A549 (cell line): ENCODE measurements at regions of chr17 and their contacts with region 1.

Region 1: DNA sequence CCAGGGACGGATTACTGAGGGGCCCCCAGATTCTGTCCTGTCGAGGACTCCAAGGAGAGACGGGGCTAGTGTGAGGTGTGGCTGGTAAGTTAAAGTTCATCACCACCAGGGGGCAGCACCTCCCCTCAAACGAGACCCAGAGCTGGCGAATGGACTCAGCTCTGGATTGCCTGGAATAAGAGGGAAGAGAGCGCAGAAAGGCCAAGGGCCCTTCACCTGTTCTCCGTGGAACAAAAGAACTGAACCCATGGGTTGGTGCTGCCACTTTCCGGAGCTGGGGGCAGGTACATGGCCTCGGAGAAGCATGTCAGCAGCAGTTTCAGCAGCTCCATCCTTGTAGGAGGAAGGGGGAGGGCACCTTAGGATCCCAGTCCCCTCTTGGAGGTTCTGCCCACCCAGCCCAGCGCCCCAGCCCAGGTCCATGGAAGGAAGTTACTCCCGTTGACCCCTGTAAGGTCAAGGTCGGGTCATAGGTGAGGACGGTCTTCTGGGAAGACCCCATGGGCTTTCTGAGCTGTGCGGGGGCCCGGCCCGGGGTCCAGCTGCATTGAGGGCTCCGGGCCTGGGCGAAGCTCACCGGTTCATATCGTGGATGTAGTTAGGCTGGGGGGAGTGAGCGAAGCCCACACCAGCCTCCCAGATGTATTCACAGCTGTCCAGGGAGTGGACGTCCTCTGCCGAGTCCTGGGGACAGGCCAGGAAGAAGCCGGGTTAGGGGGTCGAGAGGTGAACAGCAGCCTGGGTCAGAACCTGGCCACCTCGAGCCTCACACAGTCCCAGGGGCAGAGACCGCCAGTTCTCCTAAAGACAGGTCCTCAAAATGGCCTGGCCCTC is 10.7 kb downstream of the HID1 start:
- DNase-seq: peak; percentile 91 to 96
- ATAC-seq: peak; percentile 58 to 80
- H3K4me3 ChIP-seq: no peak overlapping the region
- H3K27ac ChIP-seq: 0 out of 6 replicates have a peak overlapping the region, but pooled peaks of 1 of the 2 experiments have one; percentile 9
- H3K4me1 ChIP-seq: peaks cover 12% of the 10 kb centered on the region
- CTCF ChIP-seq: peak; percentile 95
- EP300 ChIP-seq: no peak
- POLR2A ChIP-seq: no peak
- RAD21 ChIP-seq: peak; percentile 97 to 98

Region 2: DNA sequence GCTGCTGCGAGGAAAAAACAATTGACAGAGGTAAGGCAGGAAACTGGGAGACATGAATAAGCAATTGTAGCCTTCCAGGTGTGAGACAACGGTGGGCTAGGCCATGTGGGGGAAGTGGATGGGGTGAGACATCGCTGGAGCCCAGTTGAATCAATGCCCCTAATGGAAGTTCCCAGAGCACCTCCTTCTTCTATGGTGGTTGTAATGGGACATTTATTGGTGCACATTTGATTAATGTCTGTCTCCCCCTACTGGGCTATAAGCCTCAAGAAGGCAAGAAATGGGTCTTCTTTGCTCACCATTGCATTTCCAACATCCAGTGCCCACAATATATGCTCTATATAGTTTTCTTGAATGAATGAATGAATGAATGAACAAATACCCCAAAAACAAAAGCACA is 315.6 kb before region 1 on chr17:
- CTCF ChIA-PET with region 1: no interaction called
- POLR2A ChIA-PET with region 1: no interaction called
- DNase-seq: peak; percentile 62 to 74
- ATAC-seq: peak in 1 of 2 experiments; percentile 81; a peak in 3 of 6 replicates
- H3K4me3 ChIP-seq: no peak overlapping the region
- H3K27ac ChIP-seq: no peak overlapping the region
- H3K4me1 ChIP-seq: no peaks in the 10 kb centered on the region
- CTCF ChIP-seq: peak; percentile 51
- EP300 ChIP-seq: no peak
- POLR2A ChIP-seq: no peak
- RAD21 ChIP-seq: peak; percentile 38 to 62; a peak in 4 of 5 replicates

Region 3: GRCh38 chr17:74807925-74808324 is 153.9 kb before region 1 on chr17:
- CTCF ChIA-PET with region 1: no interaction called
- POLR2A ChIA-PET with region 1: no interaction called
- DNase-seq: no peak
- ATAC-seq: no peak
- H3K4me3 ChIP-seq: no peak overlapping the region
- H3K27ac ChIP-seq: no peak overlapping the region
- H3K4me1 ChIP-seq: no peaks in the 10 kb centered on the region
- CTCF ChIP-seq: no peak
- EP300 ChIP-seq: no peak
- POLR2A ChIP-seq: no peak
- RAD21 ChIP-seq: no peak

Region 4: DNA sequence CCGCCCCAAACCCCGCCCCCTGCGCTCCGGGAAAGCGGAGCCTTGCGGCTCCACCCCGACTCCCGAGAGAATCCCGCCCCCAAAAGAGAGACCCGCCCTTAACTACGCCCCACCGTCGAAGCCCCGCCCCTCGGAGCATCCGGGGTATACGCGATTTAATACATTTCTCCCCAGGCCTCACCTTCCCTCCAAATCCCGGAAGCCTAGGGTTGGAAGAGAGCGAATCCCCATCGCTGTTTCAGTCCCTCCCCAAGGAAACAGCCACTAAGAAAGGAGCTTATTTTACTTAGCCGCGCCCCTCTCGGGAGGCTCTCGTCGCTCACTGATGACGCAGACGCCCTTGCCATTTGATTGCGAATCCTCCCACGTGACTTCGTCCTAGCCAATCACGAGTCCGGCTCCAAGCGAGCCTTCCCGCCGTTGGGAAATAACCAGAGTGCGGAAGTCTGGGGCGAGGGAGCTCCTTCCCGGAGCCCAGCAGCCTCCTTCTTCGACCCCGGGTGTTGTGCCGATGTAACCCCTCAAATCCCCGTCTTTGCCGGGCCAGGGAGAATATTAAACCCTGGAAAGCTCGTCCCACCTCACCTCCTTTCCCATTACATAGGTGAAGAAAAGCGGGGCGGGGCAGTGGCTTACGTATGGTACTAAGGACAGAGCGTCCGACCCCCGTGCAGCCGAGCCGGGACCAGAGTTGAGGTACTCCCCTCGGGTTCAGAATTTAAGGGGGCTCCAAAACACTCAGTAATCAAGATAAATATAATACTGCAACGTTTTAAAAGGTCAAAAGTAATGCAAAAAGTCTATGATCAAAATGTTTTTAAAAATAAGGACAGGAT is 88.6 kb before region 1 on chr17:
- CTCF ChIA-PET with region 1: interaction called, 9 read pairs
- POLR2A ChIA-PET with region 1: interaction called, 12 read pairs
- DNase-seq: peak; percentile 100
- ATAC-seq: peak; percentile 92 to 96
- H3K4me3 ChIP-seq: peak overlapping the region; percentile 69
- H3K27ac ChIP-seq: peak overlapping the region; percentile 91 to 94
- H3K4me1 ChIP-seq: peaks cover 22% of the 10 kb centered on the region
- CTCF ChIP-seq: no peak
- EP300 ChIP-seq: no peak
- POLR2A ChIP-seq: peak; percentile 96
- RAD21 ChIP-seq: no peak

Region 5: DNA sequence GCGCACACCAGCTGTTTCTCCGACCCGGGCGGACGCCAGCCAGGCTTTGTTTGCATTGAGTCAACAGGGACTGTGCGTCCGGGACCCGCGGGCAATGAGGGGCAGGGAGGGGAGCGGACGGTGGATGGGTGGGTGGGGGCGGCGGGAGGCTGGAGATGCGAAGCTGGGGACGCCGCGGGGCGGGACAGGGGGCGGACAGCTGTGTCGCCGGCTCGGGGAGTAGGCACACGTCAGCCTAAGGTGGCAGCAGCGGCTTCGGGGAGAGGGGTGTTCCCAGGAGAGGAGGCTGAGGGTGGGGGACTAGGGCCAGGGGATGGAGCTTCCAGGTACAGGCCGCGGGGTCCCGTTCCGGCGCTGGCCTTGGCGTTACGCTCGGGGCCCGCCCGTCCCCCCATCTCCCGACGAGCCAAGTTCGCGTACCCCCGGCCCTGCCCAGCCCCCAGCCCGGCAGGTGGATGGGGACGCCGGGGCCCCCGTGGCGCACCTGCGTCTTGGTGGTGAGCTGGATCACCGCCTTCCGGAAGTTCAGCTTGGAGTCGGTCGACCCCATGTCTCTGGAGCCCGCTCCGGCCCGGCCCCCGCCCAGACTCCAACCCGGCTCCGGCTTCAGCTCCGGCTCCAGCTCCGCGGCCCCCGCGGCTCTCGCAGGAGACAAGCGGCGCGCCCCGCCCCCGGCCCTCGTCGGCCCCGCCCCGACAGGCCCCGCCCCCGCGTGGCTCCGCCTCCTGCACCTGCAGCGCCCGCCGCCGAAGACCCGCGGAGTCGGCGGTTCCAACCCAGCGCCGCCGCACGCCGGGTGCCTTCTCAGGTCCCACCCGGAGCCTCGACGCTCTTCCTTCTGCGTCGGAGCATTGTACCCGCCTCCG is 10.5 kb after region 1 on chr17 and contains the start of gene HID1:
- CTCF ChIA-PET with region 1: interaction called, 280 read pairs
- POLR2A ChIA-PET with region 1: interaction called, 4 read pairs
- DNase-seq: peak; percentile 56 to 88
- ATAC-seq: peak; percentile 83 to 85
- H3K4me3 ChIP-seq: peak within 1 kb of the TSS; percentile 71
- H3K27ac ChIP-seq: peak within 1 kb of the TSS; percentile 77 to 84
- H3K4me1 ChIP-seq: peaks cover 9% of the 10 kb centered on the region
- CTCF ChIP-seq: no peak
- EP300 ChIP-seq: no peak
- POLR2A ChIP-seq: no peak; the same call in 1 of the 2 replicates
- RAD21 ChIP-seq: no peak
- polyA plus RNA-seq, gene HID1: 11.7 and 15.2 TPM in 2 replicates

Region 6: GRCh38 chr17:75012346-75013091 is 50.6 kb after region 1 on chr17 and contains the start of gene MRPL58:
- CTCF ChIA-PET with region 1: interaction called, 404 read pairs
- POLR2A ChIA-PET with region 1: interaction called, 30 read pairs
- DNase-seq: peak; percentile 94 to 95
- ATAC-seq: peak; percentile 92 to 96
- H3K4me3 ChIP-seq: peak within 1 kb of the TSS; percentile 76
- H3K27ac ChIP-seq: peak within 1 kb of the TSS; percentile 85 to 92
- H3K4me1 ChIP-seq: peaks cover 18% of the 10 kb centered on the region
- CTCF ChIP-seq: peak; percentile 36; the same call in 2 of the 3 replicates
- EP300 ChIP-seq: no peak
- POLR2A ChIP-seq: peak; percentile 79
- RAD21 ChIP-seq: peak; percentile 37 to 48; a peak in 4 of 5 replicates
- polyA plus RNA-seq, gene MRPL58: 86.4 and 127 TPM in 2 replicates

Region 7: GRCh38 chr17:75109407-75110233 is 147.7 kb after region 1 on chr17 and contains the start of gene ARMC7:
- CTCF ChIA-PET with region 1: interaction called, 26 read pairs
- POLR2A ChIA-PET with region 1: interaction called, 7 read pairs
- DNase-seq: peak; percentile 85 to 97
- ATAC-seq: peak; percentile 78 to 80
- H3K4me3 ChIP-seq: peak within 1 kb of the TSS; percentile 77
- H3K27ac ChIP-seq: peak within 1 kb of the TSS; percentile 91 to 94
- H3K4me1 ChIP-seq: peaks cover 22% of the 10 kb centered on the region
- CTCF ChIP-seq: peak; percentile 18; the same call in 1 of the 3 replicates
- EP300 ChIP-seq: no peak
- POLR2A ChIP-seq: peak; percentile 83
- RAD21 ChIP-seq: peak; percentile 32 to 46
- polyA plus RNA-seq, gene ARMC7: 8.5 and 9.5 TPM in 2 replicates

Region 8: GRCh38 chr17:75238684-75239191 is 276.9 kb after region 1 on chr17:
- CTCF ChIA-PET with region 1: interaction called, 24 read pairs
- POLR2A ChIA-PET with region 1: no interaction called
- DNase-seq: peak; percentile 89 to 96
- ATAC-seq: peak; percentile 71 to 84
- H3K4me3 ChIP-seq: no peak overlapping the region
- H3K27ac ChIP-seq: no peak overlapping the region
- H3K4me1 ChIP-seq: 0 out of 3 replicates have a peak, but pooled peaks cover 6% of the 10 kb centered on the region
- CTCF ChIP-seq: peak; percentile 92
- EP300 ChIP-seq: no peak
- POLR2A ChIP-seq: no peak
- RAD21 ChIP-seq: peak; percentile 57 to 64

Region 9: DNA sequence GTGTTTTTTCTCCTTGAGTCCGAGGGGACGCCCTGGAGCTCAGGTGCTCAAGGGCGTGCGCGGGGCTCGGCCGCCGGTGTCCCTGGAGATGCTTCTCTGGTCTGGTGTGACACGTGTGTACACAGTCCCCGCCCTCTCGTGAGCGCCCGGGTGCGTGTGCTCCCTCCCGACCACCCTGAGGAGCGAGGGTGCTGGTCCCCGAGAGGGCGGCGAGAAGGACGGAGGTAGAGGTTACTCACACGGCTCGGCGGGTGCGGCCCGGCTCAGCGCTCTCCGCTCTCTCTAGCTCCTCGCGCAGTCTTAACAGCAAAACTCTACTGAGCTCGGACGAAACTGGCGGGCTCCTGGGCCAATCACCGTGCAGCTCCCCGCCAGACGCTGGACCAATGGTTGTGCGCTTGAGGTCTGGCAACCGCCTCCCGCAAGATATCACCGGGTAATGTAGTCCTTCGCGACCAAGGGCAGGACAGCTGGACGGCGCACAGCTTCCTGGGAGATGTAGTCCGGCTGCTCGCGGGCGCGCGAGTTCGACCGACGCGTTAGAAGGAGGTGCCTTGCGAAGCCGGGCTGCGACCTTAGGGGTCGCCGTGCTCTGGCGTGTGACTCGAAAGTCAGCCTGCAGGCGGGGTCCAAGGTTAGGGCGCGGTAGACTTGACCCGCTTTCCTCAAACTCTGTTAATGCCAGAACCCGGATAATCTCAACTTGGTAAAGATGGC is 327.4 kb after region 1 on chr17 and contains the start of gene SLC25A19:
- CTCF ChIA-PET with region 1: no interaction called
- POLR2A ChIA-PET with region 1: no interaction called
- DNase-seq: peak; percentile 100
- ATAC-seq: peak; percentile 97 to 99
- H3K4me3 ChIP-seq: peak within 1 kb of the TSS; percentile 72
- H3K27ac ChIP-seq: peak within 1 kb of the TSS; percentile 86 to 90
- H3K4me1 ChIP-seq: peaks cover 12% of the 10 kb centered on the region
- CTCF ChIP-seq: no peak
- EP300 ChIP-seq: no peak
- POLR2A ChIP-seq: peak; percentile 95
- RAD21 ChIP-seq: peak; percentile 15 to 22; a peak in 2 of 5 replicates
- polyA plus RNA-seq, gene SLC25A19: 14.8 and 15.3 TPM in 2 replicates